GM12878 (cell line): ENCODE measurements at regions of chr21 and their contacts with region 1.

Region 1: DNA sequence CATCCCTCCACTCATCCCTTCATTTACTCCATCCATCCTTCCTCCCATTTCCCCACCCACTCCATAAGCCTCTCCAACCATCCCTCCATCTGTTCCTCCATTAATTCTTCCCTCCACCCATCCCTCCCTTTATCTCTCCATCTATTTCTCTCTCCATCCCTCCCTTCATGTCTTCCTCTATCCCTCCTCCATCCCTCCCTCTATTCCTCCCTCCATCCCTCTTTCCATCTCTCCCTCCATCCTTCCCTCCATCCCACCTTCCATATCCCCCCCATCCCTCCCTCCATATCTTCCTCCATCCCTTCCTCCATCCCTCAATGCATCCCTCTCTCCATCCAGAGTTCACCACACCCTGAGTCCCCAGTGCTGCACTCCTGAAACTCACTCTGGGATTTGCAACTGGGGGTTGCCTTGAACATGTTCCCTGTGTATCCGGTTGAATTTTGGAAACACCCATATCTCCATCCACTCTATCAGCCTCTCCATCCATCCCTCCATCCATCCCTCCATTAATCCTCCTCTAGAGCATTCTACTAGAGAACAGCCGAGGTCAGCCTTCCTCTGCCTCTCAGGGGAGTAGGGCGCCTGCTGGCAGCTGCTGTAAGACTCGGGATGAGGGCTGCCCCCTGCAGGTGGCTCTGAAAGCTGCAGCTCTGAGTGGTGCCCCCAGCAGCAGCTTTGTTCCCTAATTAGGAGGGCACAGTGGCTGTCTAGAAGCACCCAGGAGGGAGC is 39.4 kb downstream of the ABCG1 start:
- DNase-seq: no peak
- ATAC-seq: peak; percentile 97
- H3K4me3 ChIP-seq: no peak overlapping the region
- H3K27ac ChIP-seq: no peak overlapping the region
- H3K4me1 ChIP-seq: no peaks in the 10 kb centered on the region
- H3K27me3 ChIP-seq: no peaks in the 10 kb centered on the region; a peak in 1 of 4 replicates
- CTCF ChIP-seq: peak; percentile 90 to 97 (median 90)
- EP300 ChIP-seq: no peak
- POLR2A ChIP-seq: no peak
- RAD21 ChIP-seq: peak; percentile 93

Region 2: DNA sequence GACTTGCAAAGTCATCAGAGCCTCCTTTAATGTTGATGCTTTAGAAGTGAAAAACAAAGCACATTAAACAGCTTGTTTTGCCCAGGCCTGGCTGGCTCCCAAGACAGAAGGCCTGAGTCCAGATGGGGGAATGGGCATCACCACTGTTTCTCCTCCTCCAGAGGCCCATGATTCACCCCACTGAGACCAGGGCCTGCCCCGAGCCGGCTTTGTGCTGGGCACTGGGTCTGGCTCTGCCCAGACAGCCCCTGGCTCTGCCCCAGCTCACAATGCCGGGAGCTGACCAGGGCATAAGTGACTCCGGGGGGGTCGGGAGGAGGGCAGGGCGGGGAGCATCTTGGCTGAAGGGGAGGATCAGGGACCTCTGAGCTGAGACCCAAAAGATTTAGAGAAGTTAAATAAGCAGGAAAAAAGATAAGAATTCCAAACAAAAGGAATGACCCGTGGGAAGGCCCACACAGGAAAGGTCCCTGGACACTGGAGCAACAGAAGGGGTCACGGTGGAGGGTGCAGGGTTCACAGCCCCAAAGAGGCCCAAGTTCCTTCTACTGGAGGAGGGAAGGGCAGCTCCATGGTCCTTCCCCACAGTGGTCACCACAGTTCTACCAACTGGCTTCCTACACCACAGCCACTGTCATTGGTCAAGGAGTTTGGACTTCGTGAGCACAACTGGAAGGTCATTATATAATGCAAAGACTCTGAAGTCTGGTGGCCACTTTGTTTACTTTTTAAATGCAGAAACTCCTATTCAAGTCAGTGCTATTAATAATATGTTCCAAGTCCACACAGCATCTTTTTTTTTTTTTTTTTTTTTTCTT is 310.0 kb before region 1 on chr21:
- CTCF ChIA-PET with region 1: no interaction called
- POLR2A ChIA-PET with region 1: no interaction called
- RAD21 ChIA-PET with region 1: no interaction called
- SMC1A ChIA-PET with region 1: no interaction called
- in situ Hi-C with region 1: no loop called
- intact Hi-C with region 1: no loop called
- DNase-seq: no peak
- ATAC-seq: no peak
- H3K4me3 ChIP-seq: no peak overlapping the region
- H3K27ac ChIP-seq: no peak overlapping the region
- H3K4me1 ChIP-seq: peaks cover 8% of the 10 kb centered on the region
- H3K27me3 ChIP-seq: no peaks in the 10 kb centered on the region
- CTCF ChIP-seq: no peak
- EP300 ChIP-seq: no peak
- POLR2A ChIP-seq: no peak
- RAD21 ChIP-seq: no peak

Region 3: DNA sequence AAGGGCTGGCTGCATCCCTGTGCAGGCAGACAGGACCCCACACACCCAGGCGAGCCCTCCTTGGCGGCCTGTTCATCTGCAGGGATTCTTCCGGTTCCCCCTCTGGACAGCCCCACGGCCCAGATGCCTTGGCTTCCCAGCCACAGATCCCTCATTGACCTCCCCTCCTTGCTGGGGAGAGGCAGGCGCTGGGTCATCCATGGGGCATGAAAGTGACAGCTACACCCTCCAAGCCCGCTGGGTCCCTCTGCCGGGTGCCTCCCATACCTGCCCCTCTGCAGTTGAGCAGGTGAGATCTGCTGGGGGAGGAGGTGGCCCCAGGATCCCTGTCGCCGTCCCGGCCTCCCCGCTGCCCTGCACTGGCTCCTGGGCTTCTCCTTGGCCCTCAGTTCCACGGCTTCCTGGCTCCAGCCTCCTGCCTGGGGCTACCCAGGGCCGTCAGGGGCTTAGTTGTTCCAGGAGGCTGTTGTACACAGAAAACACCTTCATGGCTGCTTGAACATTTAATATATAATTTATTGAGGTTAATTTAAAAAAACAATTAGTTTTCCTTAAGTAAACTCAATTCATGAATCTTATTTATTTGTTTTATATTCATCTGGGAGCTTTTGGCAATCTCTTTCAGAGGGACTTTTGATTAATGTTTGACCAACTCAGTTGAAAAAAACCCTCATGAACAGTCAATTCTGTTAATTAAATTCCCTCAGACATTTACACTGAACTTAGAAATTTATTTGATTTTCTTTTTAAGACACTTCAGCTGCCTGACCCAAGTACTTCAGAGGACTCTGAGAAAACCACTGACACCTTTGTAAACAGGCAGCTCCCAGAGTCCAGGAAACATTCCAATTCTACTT is 107.0 kb before region 1 on chr21:
- CTCF ChIA-PET with region 1: interaction called, 83 read pairs
- POLR2A ChIA-PET with region 1: interaction called, 3 read pairs
- RAD21 ChIA-PET with region 1: interaction called, 68 read pairs
- SMC1A ChIA-PET with region 1: interaction called, 71 read pairs
- in situ Hi-C with region 1: no loop called
- intact Hi-C with region 1: no loop called
- DNase-seq: no peak
- ATAC-seq: no peak
- H3K4me3 ChIP-seq: no peak overlapping the region
- H3K27ac ChIP-seq: no peak overlapping the region
- H3K4me1 ChIP-seq: no peaks in the 10 kb centered on the region
- H3K27me3 ChIP-seq: no peaks in the 10 kb centered on the region; a peak in 1 of 4 replicates
- CTCF ChIP-seq: no peak
- EP300 ChIP-seq: no peak
- POLR2A ChIP-seq: no peak
- RAD21 ChIP-seq: no peak

Region 4: DNA sequence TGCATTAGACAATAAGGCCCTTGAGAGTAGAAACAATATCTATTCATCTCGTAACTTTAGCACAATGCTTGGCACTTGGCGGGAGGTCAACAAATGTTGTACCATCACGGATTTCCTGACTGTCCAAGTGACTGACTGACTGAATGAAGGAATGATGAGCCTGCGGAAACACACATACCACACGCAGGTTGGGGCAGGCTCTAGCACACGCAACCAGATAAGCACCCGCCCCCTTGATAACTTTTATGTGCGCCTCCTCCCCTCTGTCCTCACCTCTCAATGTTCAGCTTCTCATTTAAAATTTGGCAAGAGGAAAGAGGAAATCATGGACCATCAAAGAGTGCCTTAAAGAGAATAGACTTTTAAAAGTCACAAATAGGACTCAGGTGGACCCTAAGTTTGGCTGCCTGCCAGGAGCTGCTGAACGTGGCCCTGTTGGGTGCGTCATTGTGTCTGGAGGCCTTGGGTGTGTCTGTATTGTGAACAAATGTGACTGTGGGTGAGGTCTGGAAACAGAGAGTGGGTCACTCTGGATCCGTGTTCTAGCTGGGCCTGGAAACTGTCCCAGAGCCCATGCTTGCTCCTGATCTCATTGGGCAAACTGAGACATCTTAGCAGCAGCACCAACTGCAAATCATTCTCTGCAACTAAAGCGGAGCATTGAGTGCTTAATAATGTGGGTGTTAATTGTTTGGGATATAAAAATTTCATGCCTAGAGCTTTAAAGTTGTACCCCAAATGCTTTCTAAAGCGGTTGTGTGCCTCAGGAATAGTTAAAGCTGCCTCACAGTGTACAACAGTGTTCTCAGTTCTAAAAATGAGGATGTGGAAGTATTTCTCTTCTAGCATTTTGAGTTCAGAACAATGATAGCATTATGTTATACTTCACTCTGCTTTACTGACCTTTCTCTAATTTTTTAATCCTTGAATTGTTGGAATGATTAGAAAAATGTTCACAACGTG is 86.9 kb before region 1 on chr21:
- CTCF ChIA-PET with region 1: interaction called, 129 read pairs
- POLR2A ChIA-PET with region 1: interaction called, 3 read pairs
- RAD21 ChIA-PET with region 1: interaction called, 105 read pairs
- SMC1A ChIA-PET with region 1: interaction called, 97 read pairs
- in situ Hi-C with region 1: loop called (anchors 5 kb)
- intact Hi-C with region 1: no loop called
- DNase-seq: no peak
- ATAC-seq: 0 out of 3 replicates have a peak, but pooled peaks have one; percentile 31
- H3K4me3 ChIP-seq: no peak overlapping the region
- H3K27ac ChIP-seq: no peak overlapping the region
- H3K4me1 ChIP-seq: no peaks in the 10 kb centered on the region
- H3K27me3 ChIP-seq: 0 out of 4 replicates have a peak, but pooled peaks cover 0 to 2% of the 10 kb centered on the region in 2 experiments
- CTCF ChIP-seq: no peak
- EP300 ChIP-seq: no peak
- POLR2A ChIP-seq: no peak
- RAD21 ChIP-seq: no peak

Region 5: GRCh38 chr21:42220138-42220701 is 38.1 kb before region 1 on chr21:
- CTCF ChIA-PET with region 1: interaction called, 51 read pairs
- POLR2A ChIA-PET with region 1: interaction called, 4 read pairs
- RAD21 ChIA-PET with region 1: interaction called, 27 read pairs
- SMC1A ChIA-PET with region 1: interaction called, 34 read pairs
- in situ Hi-C with region 1: no loop called
- intact Hi-C with region 1: no loop called
- DNase-seq: no peak
- ATAC-seq: peak; percentile 81
- H3K4me3 ChIP-seq: peak overlapping the region; percentile 71
- H3K27ac ChIP-seq: no peak overlapping the region
- H3K4me1 ChIP-seq: peaks cover 9% of the 10 kb centered on the region; the same call in 1 of the 2 replicates
- H3K27me3 ChIP-seq: peaks cover 0 to 4% of the 10 kb centered on the region in 2 experiments; a peak in 1 of 4 replicates
- CTCF ChIP-seq: no peak
- EP300 ChIP-seq: no peak
- POLR2A ChIP-seq: no peak
- RAD21 ChIP-seq: no peak

Region 6: DNA sequence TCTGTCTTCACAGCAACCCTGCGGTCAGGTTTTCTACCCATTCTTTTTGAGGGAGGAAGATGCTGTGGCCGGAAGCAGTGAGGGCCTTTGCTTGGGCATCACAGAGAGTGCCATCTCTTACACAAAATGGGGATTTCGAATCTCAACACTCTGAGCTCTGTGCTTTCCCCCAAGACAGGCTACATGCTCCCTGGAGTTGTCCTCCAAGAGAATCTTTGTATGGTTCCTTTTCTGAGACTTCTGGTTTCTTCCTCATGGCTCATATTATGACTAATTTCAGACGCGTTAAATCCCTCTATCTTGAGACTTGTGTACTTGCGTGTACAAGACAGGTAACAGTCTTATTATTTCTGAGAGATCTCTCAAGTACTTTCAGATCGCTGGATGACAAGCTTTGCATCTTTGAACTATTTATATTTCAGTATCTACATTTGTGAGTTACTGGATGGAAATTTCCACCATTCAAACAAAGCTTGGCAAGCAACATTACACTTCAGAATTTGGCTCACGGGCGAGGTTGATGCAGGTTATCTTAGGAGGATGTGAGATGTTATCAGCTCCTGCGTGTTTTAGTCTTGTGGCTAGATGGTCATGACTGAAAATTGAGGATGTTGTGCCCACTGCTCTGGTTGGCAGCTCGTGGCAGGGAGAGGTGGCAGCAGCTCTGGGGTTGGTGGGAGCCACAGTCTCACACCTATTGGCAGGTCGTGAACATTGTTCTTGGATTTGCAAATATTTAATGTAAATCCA is 20.0 kb before region 1 on chr21:
- CTCF ChIA-PET with region 1: interaction called, 151 read pairs
- POLR2A ChIA-PET with region 1: interaction called, 11 read pairs
- RAD21 ChIA-PET with region 1: interaction called, 60 read pairs
- SMC1A ChIA-PET with region 1: interaction called, 46 read pairs
- in situ Hi-C with region 1: no loop called
- intact Hi-C with region 1: no loop called
- DNase-seq: peak; percentile 57
- ATAC-seq: peak; percentile 39
- H3K4me3 ChIP-seq: no peak overlapping the region
- H3K27ac ChIP-seq: peak overlapping the region; percentile 22
- H3K4me1 ChIP-seq: peaks cover 65% of the 10 kb centered on the region
- H3K27me3 ChIP-seq: no peaks in the 10 kb centered on the region
- CTCF ChIP-seq: no peak
- EP300 ChIP-seq: peak; percentile 25 to 39; a peak in 1 of 4 replicates
- POLR2A ChIP-seq: no peak
- RAD21 ChIP-seq: no peak

Region 7: GRCh38 chr21:42309753-42310221 is 51.5 kb after region 1 on chr21:
- CTCF ChIA-PET with region 1: interaction called, 10 read pairs
- POLR2A ChIA-PET with region 1: no interaction called
- RAD21 ChIA-PET with region 1: interaction called, 15 read pairs
- SMC1A ChIA-PET with region 1: interaction called, 3 read pairs
- in situ Hi-C with region 1: no loop called
- intact Hi-C with region 1: no loop called
- DNase-seq: no peak
- ATAC-seq: peak; percentile 86
- H3K4me3 ChIP-seq: no peak overlapping the region
- H3K27ac ChIP-seq: no peak overlapping the region
- H3K4me1 ChIP-seq: no peaks in the 10 kb centered on the region
- H3K27me3 ChIP-seq: no peaks in the 10 kb centered on the region
- CTCF ChIP-seq: peak; percentile 77 to 92 (median 90)
- EP300 ChIP-seq: no peak
- POLR2A ChIP-seq: no peak
- RAD21 ChIP-seq: peak; percentile 90